ENCODE measurements at regions of chr14 and their contacts with region 1.

Region 1: GRCh38 chr14:88852632-88853031 is 28.2 kb downstream of the TTC8 start:
- DNase-seq: no peak
- H3K4me3 ChIP-seq: no peak overlapping the region
- CTCF ChIP-seq: no peak

Region 2: GRCh38 chr14:88765130-88765529 is 87.5 kb before region 1 on chr14:
- CTCF ChIA-PET with region 1: no interaction called
- POLR2A ChIA-PET with region 1: no interaction called
- DNase-seq: no peak
- H3K4me3 ChIP-seq: no peak overlapping the region
- CTCF ChIP-seq: no peak

Region 3: GRCh38 chr14:88831284-88831683 is 21.3 kb before region 1 on chr14:
- CTCF ChIA-PET with region 1: no interaction called
- POLR2A ChIA-PET with region 1: no interaction called
- DNase-seq: peak; percentile 33
- H3K4me3 ChIP-seq: no peak overlapping the region
- CTCF ChIP-seq: no peak

Region 4: GRCh38 chr14:88868558-88869159 is 16.0 kb after region 1 on chr14:
- CTCF ChIA-PET with region 1: interaction called, 10 read pairs
- POLR2A ChIA-PET with region 1: interaction called, 3 read pairs
- DNase-seq: no peak
- H3K4me3 ChIP-seq: no peak overlapping the region
- CTCF ChIP-seq: peak; percentile 17

Region 5: GRCh38 chr14:89293314-89293916 is 440.8 kb after region 1 on chr14:
- CTCF ChIA-PET with region 1: no interaction called
- POLR2A ChIA-PET with region 1: no interaction called
- DNase-seq: no peak
- H3K4me3 ChIP-seq: no peak overlapping the region
- CTCF ChIP-seq: no peak